Activated CD4-positive, alpha-beta T cell treated with anti-CD3 and anti-CD28 coated beads for 36 hours (primary cell): ENCODE measurements at regions of chr16 and their contacts with region 1.

Region 1: DNA sequence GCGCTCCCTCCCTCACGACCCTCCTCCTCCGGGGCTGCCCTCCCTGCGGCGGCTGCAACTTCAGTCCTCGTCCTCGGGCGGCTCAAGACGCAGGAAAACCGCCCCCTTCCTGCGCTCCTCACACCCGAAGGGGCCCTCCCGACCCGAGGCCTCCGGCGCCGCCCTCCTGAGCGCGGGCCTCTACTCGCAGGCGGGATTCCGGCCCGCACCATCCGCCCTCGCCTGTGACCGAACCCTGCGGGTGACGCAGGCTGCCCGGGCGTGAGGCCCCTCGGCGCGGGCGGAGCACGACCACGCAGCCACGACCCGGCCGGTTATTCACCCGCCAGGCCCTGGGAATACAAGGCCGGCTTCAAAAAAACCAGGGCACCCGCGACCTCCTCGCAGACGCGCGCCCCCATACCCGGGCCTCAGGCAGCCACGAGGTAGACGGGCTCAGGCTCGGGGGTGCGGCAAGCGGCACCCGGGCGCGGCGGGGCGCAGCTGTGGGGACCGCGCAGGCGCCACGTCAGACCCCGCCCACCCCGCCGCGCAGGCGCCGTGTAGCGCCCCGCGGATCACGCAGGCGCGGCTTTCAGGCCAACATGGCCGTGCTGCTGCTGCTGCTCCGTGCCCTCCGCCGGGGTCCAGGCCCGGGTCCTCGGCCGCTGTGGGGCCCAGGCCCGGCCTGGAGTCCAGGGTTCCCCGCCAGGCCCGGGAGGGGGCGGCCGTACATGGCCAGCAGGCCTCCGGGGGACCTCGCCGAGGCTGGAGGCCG is at the start of gene SPG7:
- DNase-seq: peak; percentile 94
- ATAC-seq: peak; percentile 74
- H3K4me3 Mint-ChIP-seq: peak within 1 kb of the TSS; percentile 90
- H3K27ac Mint-ChIP-seq: peak within 1 kb of the TSS; percentile 97
- H3K4me1 Mint-ChIP-seq: peaks cover 31% of the 10 kb centered on the region
- H3K27me3 Mint-ChIP-seq: no peaks in the 10 kb centered on the region
- total RNA-seq, gene SPG7: 68.6 to 76.7 TPM

Region 2: GRCh38 chr16:88821168-88821850 is 686.7 kb before region 1 on chr16:
- CTCF ChIA-PET with region 1: no interaction called
- POLR2A ChIA-PET with region 1: no interaction called
- intact Hi-C with region 1: no loop called
- DNase-seq: no peak
- ATAC-seq: no peak
- H3K4me3 Mint-ChIP-seq: no peak overlapping the region
- H3K27ac Mint-ChIP-seq: no peak overlapping the region
- H3K4me1 Mint-ChIP-seq: no peaks in the 10 kb centered on the region
- H3K27me3 Mint-ChIP-seq: no peaks in the 10 kb centered on the region

Region 3: GRCh38 chr16:89193021-89193575 is 314.9 kb before region 1 on chr16:
- CTCF ChIA-PET with region 1: no interaction called
- POLR2A ChIA-PET with region 1: no interaction called
- intact Hi-C with region 1: loop called in 1 of 2 experiments (anchors 5 kb)
- DNase-seq: no peak
- ATAC-seq: peak; percentile 78
- H3K4me3 Mint-ChIP-seq: no peak overlapping the region
- H3K27ac Mint-ChIP-seq: no peak overlapping the region
- H3K4me1 Mint-ChIP-seq: no peaks in the 10 kb centered on the region
- H3K27me3 Mint-ChIP-seq: no peaks in the 10 kb centered on the region

Region 4: GRCh38 chr16:89246903-89247733 is 260.9 kb before region 1 on chr16:
- CTCF ChIA-PET with region 1: no interaction called
- POLR2A ChIA-PET with region 1: no interaction called
- intact Hi-C with region 1: loop called in 1 of 2 experiments (anchors 1 kb)
- DNase-seq: peak; percentile 99
- ATAC-seq: peak; percentile 93
- H3K4me3 Mint-ChIP-seq: peak overlapping the region; percentile 71
- H3K27ac Mint-ChIP-seq: no peak overlapping the region
- H3K4me1 Mint-ChIP-seq: peaks cover 15% of the 10 kb centered on the region
- H3K27me3 Mint-ChIP-seq: no peaks in the 10 kb centered on the region

Region 5: DNA sequence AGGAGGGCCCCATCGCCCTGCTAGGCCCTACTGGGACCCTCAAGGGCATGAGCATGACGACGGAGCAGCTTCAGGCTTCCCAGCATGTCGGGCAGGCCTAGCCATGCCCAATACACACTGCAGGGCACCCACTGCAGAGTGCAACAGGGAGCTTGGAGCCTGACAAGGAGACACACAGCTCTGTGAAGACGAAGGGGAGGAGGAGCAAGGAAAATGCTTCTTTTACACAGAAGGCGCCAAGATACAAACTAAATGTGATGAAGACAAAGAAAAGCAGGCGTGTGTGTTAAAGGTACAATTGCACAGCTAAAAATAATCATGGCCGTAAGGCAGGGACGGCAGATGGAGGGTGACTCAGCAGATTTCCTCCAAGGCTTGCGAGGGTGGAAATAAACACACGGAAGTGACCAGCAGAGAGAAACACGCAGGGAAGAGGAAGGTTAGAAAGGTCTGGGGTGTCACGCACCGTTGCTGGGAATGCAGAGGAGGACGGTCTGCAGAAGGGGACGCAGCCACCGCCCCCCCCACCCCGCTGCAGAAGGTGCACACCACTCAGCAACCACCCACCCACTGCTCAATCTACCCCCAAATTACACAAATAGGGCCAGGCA is 182.0 kb before region 1 on chr16:
- CTCF ChIA-PET with region 1: interaction called, 3 read pairs
- POLR2A ChIA-PET with region 1: no interaction called
- intact Hi-C with region 1: loop called (anchors 1 to 5 kb)
- DNase-seq: no peak
- ATAC-seq: no peak
- H3K4me3 Mint-ChIP-seq: no peak overlapping the region
- H3K27ac Mint-ChIP-seq: peak overlapping the region; percentile 77
- H3K4me1 Mint-ChIP-seq: peaks cover 87% of the 10 kb centered on the region
- H3K27me3 Mint-ChIP-seq: no peaks in the 10 kb centered on the region

Region 6: DNA sequence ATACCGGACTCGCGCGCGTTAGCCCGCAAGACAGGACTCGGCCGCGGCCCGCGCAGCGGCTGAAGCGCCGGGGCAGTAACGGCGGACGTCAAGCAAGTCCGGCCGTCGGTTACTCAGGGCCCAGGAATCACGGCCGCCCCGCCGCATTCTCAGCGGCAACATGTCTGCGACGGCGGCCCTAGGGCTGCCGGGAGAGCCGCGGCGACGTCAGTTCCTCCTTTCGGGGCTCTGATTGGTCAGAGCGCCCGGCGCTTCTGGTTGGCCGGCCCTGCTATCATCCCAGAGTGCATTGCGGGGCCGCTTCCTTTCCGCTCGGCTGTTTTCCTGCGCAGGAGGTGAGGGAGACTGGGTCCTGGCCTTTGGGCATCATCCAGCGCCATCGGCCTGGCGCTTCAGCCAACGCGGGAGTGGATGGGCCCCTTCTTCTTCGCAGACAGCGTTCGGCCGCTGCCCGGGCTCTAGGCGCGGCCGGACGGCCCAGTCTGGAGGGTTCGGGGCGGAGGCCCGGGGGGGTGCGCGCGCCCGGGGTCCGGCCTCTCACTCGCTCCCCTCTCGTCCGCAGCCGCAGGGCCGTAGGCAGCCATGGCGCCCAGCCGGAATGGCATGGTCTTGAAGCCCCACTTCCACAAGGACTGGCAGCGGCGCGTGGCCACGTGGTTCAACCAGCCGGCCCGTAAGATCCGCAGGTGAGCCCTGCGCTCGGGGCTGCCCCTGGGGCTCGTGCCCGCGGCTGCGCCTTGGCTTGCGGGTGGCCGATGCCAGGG is 52.5 kb after region 1 on chr16 and contains the start of gene RPL13:
- CTCF ChIA-PET with region 1: no interaction called
- POLR2A ChIA-PET with region 1: interaction called, 4 read pairs
- intact Hi-C with region 1: loop called (anchors 1 kb)
- DNase-seq: peak; percentile 97
- ATAC-seq: peak; percentile 90
- H3K4me3 Mint-ChIP-seq: peak within 1 kb of the TSS; percentile 95
- H3K27ac Mint-ChIP-seq: peak within 1 kb of the TSS; percentile 99
- H3K4me1 Mint-ChIP-seq: peaks cover 46% of the 10 kb centered on the region
- H3K27me3 Mint-ChIP-seq: no peaks in the 10 kb centered on the region
- total RNA-seq, gene RPL13: 2,518 to 3,038 TPM